Caco-2 (cell line): ENCODE measurements at regions of chr15 and their contacts with region 1.

Region 1: DNA sequence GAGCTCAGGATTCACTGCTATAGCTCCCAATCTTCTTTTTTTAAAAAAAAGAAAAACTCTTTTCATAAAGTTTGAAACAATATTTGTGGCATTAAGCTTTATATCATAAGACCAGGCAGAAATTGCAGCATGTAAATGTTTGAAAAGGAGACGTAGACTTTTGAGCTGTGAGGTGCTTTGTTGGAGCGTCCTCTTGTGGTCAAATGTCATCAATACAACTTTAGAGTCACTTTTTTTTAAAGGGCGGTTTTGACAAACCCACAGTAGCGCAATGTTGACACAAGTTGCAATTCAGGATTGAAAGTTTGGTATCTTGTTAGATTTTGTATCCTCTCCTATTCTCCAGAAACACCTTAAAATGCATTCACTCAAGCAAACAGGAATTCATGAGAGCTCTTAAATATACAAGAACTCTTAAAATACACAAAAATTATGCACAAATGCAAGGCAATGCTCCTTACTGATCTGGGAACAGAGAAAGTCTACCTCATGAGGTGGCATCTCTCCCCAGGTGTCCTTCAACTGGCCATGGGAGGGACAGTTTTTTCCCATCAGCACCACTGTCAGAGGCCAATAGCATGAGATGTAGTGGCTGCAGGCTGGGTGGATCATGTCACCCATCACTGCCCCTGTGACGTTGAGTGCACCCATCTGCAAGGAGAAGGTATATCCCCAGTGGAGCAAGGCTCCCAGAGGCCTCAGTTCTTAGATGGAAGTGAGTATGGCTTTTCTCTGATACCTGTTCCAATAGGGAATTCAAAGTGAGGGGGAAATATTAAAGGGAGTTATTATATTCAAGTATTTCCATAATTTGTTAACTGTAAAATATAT is 70.7 kb downstream of the ANXA2 start:
- DNase-seq: peak in 1 of 2 experiments; percentile 63
- H3K4me3 ChIP-seq: no peak overlapping the region
- H3K4me3 Mint-ChIP-seq: no peak overlapping the region
- H3K27ac Mint-ChIP-seq: no peak overlapping the region
- H3K4me1 ChIP-seq: no peaks in the 10 kb centered on the region
- H3K4me1 Mint-ChIP-seq: no peaks in the 10 kb centered on the region
- H3K27me3 ChIP-seq: no peaks in the 10 kb centered on the region
- H3K27me3 Mint-ChIP-seq: peaks cover 14% of the 10 kb centered on the region
- CTCF ChIP-seq: peak; percentile 80 to 84

Region 2: GRCh38 chr15:59751552-59752413 is 575.3 kb before region 1 on chr15:
- CTCF ChIA-PET with region 1: interaction called, 3 read pairs
- POLR2A ChIA-PET with region 1: no interaction called
- intact Hi-C with region 1: loop called (anchors 5 kb)
- DNase-seq: peak in 1 of 2 experiments; percentile 8
- H3K4me3 ChIP-seq: no peak overlapping the region
- H3K4me3 Mint-ChIP-seq: no peak overlapping the region
- H3K27ac Mint-ChIP-seq: no peak overlapping the region
- H3K4me1 ChIP-seq: no peaks in the 10 kb centered on the region
- H3K4me1 Mint-ChIP-seq: no peaks in the 10 kb centered on the region
- H3K27me3 ChIP-seq: no peaks in the 10 kb centered on the region; the same call in 1 of the 2 replicates
- H3K27me3 Mint-ChIP-seq: peaks cover 6% of the 10 kb centered on the region
- CTCF ChIP-seq: peak; percentile 39 to 56

Region 3: GRCh38 chr15:60179786-60180391 is 147.2 kb before region 1 on chr15:
- CTCF ChIA-PET with region 1: no interaction called
- POLR2A ChIA-PET with region 1: no interaction called
- intact Hi-C with region 1: loop called (anchors 10 kb)
- DNase-seq: peak; percentile 32 to 34
- H3K4me3 ChIP-seq: no peak overlapping the region
- H3K4me3 Mint-ChIP-seq: no peak overlapping the region
- H3K27ac Mint-ChIP-seq: no peak overlapping the region
- H3K4me1 ChIP-seq: no peaks in the 10 kb centered on the region
- H3K4me1 Mint-ChIP-seq: no peaks in the 10 kb centered on the region
- H3K27me3 ChIP-seq: no peaks in the 10 kb centered on the region; the same call in 1 of the 2 replicates
- H3K27me3 Mint-ChIP-seq: peaks cover 19% of the 10 kb centered on the region
- CTCF ChIP-seq: peak; percentile 50 to 83

Region 4: GRCh38 chr15:60255390-60255789 is 71.6 kb before region 1 on chr15:
- CTCF ChIA-PET with region 1: no interaction called
- POLR2A ChIA-PET with region 1: no interaction called
- intact Hi-C with region 1: loop called (anchors 10 kb)
- DNase-seq: peak in 1 of 2 experiments; percentile 29
- H3K4me3 ChIP-seq: no peak overlapping the region
- H3K4me3 Mint-ChIP-seq: no peak overlapping the region
- H3K27ac Mint-ChIP-seq: no peak overlapping the region
- H3K4me1 ChIP-seq: no peaks in the 10 kb centered on the region
- H3K4me1 Mint-ChIP-seq: no peaks in the 10 kb centered on the region
- H3K27me3 ChIP-seq: no peaks in the 10 kb centered on the region
- H3K27me3 Mint-ChIP-seq: peaks cover 3% of the 10 kb centered on the region
- CTCF ChIP-seq: no peak

Region 5: GRCh38 chr15:60390871-60391501 is 63.9 kb after region 1 on chr15:
- CTCF ChIA-PET with region 1: no interaction called
- POLR2A ChIA-PET with region 1: no interaction called
- intact Hi-C with region 1: no loop called
- DNase-seq: peak in 1 of 2 experiments; percentile 39
- H3K4me3 ChIP-seq: no peak overlapping the region
- H3K4me3 Mint-ChIP-seq: peak overlapping the region; percentile 58
- H3K27ac Mint-ChIP-seq: peak overlapping the region; percentile 76
- H3K4me1 ChIP-seq: peaks cover 90% of the 10 kb centered on the region
- H3K4me1 Mint-ChIP-seq: peaks cover 73% of the 10 kb centered on the region
- H3K27me3 ChIP-seq: no peaks in the 10 kb centered on the region
- H3K27me3 Mint-ChIP-seq: no peaks in the 10 kb centered on the region
- CTCF ChIP-seq: no peak

Region 6: GRCh38 chr15:60605879-60606304 is 278.9 kb after region 1 on chr15:
- CTCF ChIA-PET with region 1: no interaction called
- POLR2A ChIA-PET with region 1: no interaction called
- intact Hi-C with region 1: no loop called
- DNase-seq: no peak
- H3K4me3 ChIP-seq: no peak overlapping the region
- H3K4me3 Mint-ChIP-seq: no peak overlapping the region
- H3K27ac Mint-ChIP-seq: no peak overlapping the region
- H3K4me1 ChIP-seq: no peaks in the 10 kb centered on the region
- H3K4me1 Mint-ChIP-seq: no peaks in the 10 kb centered on the region
- H3K27me3 ChIP-seq: no peaks in the 10 kb centered on the region
- H3K27me3 Mint-ChIP-seq: peaks cover 32% of the 10 kb centered on the region
- CTCF ChIP-seq: no peak